ENCODE measurements at regions of chr4 and their contacts with region 1.

Region 1: DNA sequence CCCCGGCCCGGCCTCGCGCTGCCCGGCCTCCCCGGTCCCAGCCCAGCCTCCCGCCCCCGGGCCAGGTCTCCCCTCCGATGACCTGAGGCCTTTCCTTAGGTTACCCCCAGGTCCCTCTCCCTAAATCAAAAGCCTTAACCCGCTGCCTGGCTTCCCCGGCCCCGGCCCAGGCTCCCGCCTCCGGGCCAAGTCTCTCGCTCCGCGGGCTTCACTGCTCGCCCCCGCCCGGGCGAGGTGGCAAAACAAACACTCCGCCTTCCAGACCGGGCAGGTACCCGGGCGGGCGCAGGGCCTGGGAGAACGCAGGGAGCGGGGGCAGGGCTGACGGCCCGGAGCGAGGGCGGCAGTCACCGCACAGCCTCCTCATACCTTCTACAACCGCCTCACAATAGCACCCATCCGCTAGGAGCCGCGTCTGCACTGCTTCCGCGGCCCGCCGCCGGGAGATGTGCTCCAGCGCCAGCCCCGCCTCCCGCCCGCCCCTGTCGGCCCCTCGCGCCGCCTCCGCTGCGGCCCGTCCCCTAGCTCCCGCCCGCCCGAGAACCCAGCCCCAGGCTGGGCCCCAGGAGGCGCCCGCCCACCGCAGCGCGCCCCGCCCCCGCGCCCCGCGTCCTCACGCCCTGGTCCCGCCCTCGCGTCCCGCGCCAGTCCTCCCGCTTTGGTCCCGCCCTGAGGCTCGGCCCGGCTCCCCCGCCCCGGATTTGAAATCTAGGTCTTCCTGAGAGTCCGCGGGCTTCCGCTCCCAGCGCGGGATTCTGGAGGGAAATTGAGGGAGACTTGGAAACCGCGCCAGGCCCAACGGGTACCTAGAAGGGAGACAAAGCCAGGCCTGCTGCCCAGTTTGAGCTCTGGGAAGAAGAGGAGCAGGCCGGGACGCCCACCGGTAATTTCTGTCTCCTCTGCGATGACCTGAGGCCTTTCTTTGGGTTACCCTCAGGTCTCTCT is at the starts of genes CASP3 and PRIMPOL:
- DNase-seq: peak; percentile 98 to 99
- ATAC-seq: peak; percentile 98
- H3K4me3 ChIP-seq: peak within 1 kb of the TSS; percentile 77 to 93
- H3K27ac ChIP-seq: peak within 1 kb of the TSS; percentile 95 to 97
- H3K4me1 ChIP-seq: peaks cover 0 to 4% of the 10 kb centered on the region in 2 donors
- H3K27me3 ChIP-seq: no peaks in the 10 kb centered on the region
- total RNA-seq, gene CASP3: 19.3 to 23.2 TPM
- total RNA-seq, gene PRIMPOL: 16.0 to 23.8 TPM

Region 2: DNA sequence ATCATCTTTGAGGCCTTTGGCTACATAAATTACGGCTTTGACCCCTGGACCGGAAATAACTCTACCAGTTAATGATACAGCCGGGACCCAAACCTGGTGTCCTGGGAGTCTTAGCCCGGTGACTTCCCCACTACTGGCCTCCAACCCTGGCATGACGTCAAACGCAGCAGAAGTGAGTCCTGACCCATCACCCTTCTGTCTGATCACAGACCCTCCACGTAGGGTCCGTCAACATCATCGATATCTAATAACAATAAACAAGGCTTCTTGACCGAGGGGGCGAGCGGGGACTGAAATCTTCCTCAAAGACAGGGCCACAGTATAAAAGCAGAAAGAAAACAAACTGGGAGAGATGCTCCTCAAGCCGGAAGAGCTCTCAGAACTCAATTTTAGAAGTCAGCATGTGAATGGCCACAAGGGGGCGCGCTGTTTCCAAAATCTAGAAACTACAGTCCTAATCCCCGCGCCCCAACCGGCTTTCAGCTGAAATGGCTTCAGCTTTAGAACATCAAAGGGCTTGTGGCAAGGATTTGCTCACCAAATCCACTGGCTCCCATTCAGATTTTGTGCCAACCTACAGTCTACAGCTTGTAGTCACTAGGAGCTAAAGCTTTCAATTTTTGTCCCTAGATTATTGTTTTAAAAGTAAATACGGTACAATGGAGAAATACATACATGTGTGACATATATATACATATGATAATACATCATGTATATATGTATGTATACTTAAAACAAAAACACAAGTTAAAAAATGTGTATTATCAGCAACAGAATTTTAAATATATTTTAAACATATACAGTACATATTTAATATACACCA is 385.2 kb before region 1 on chr4:
- intact Hi-C with region 1: loop called in 1 of 2 experiments (anchors 5 kb)
- DNase-seq: peak; percentile 96 to 98
- ATAC-seq: peak; percentile 89
- H3K4me3 ChIP-seq: no peak overlapping the region
- H3K27ac ChIP-seq: no peak overlapping the region
- H3K4me1 ChIP-seq: no peaks in the 10 kb centered on the region
- H3K27me3 ChIP-seq: no peaks in the 10 kb centered on the region

Region 3: GRCh38 chr4:184733654-184734524 is 84.6 kb after region 1 on chr4 and contains the start of gene CENPU:
- intact Hi-C with region 1: loop called in 1 of 2 experiments (anchors 5 kb)
- DNase-seq: peak; percentile 97 to 98
- ATAC-seq: peak; percentile 100
- H3K4me3 ChIP-seq: peak within 1 kb of the TSS; percentile 31 to 68
- H3K27ac ChIP-seq: no peak within 1 kb of the TSS
- H3K4me1 ChIP-seq: no peaks in the 10 kb centered on the region
- H3K27me3 ChIP-seq: no peaks in the 10 kb centered on the region
- total RNA-seq, gene CENPU: 1.1 to 3.1 TPM